ENCODE measurements at regions of chr2 and their contacts with region 1.

Region 1: DNA sequence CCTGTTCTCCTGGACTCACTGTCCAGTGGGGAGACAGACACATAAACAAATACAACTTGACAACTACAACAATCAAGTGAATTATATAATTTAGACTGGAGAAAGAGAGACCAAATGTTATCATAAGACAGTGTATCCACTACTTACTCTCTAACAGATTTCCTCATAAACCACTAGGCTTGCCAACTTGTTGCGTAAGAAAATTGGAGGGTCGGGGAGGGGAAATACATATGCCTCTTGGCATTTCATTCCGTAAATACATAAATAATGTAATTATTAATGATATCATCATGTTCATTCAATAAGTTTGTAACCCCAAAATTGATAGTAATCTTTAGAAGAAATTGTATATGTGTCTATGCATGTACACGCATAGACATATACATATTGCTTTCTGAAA is 14.9 kb downstream of the RAB6D start:
- DNase-seq: no peak
- H3K4me3 ChIP-seq: no peak overlapping the region
- H3K27ac ChIP-seq: no peak overlapping the region
- H3K4me1 ChIP-seq: no peaks in the 10 kb centered on the region
- H3K27me3 ChIP-seq: no peaks in the 10 kb centered on the region
- CTCF ChIP-seq: no peak

Region 2: DNA sequence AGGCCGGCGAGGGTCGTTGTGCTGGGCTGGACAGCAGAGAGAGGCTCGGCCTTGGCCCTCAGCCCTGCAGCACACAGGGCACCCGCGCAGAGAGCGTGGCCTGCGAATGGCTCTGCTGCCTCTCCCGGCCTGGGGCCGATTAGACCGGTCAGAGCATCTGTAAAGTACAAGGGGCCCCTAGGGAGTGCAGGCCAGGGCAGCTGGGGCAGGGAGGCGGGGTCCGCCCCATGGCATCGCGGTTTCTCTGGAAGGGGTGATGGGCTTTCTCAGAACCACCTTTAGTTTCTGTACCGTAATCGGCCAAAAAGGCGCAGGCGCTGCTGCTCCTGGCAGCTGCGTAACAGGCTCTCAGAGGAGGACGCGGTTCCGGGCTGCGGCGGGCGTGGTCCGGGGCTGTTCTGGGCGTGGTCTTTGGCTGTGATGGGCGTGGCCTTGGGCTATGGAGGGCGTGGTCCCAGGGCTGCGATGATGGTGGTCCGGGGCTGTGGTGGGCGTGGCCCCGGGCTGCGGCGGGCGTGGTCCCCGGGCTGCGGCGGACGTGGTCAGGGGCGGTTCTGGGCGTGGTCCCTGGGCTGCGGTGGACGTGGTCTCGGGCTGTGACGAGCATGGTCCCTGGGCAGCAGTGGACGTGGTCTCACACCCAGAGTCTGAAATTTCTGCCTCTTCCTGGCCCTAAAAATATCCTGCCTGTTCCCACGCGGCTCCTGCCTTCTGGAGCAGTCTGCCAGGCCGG is 621.6 kb before region 1 on chr2:
- CTCF ChIA-PET with region 1: no interaction called
- dilution Hi-C with region 1: loop called (anchors 25 kb)
- in situ Hi-C with region 1: no loop called
- intact Hi-C with region 1: no loop called
- DNase-seq: peak; percentile 73
- H3K4me3 ChIP-seq: peak overlapping the region; percentile 61 to 66 (median 63)
- H3K27ac ChIP-seq: peak overlapping the region; percentile 41
- H3K4me1 ChIP-seq: peaks cover 20% of the 10 kb centered on the region
- H3K27me3 ChIP-seq: no peaks in the 10 kb centered on the region
- CTCF ChIP-seq: no peak

Region 3: GRCh38 chr2:131016826-131017741 is 331.9 kb before region 1 on chr2:
- CTCF ChIA-PET with region 1: no interaction called
- dilution Hi-C with region 1: no loop called
- in situ Hi-C with region 1: no loop called
- intact Hi-C with region 1: no loop called
- DNase-seq: peak; percentile 98
- H3K4me3 ChIP-seq: peak overlapping the region; percentile 25 to 46 (median 40)
- H3K27ac ChIP-seq: peak overlapping the region; percentile 94
- H3K4me1 ChIP-seq: peaks cover 42% of the 10 kb centered on the region
- H3K27me3 ChIP-seq: no peaks in the 10 kb centered on the region
- CTCF ChIP-seq: peak in 1 of 2 donors; percentile 5

Region 4: DNA sequence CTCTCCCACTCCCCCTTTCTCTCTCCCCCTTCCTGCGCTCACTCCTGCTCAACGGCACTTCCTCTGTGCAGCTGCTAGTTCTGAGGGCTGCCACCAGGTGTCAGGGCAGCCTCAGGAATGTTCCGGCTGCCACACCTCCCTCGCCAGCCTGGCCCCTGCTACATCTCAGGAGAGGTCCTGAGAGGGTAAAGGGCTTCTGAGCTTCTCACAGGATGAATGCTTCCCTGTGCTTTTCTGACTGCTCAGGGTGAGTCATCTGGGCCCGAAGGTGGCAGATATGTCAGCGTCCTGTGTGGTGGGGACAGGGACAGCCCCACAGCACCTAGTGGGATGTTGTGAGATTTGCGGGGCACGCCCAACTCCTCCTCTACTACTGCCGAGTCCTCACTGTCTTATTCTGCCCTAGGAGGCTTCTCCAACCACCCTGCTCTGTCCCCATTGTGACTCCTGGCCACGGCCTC is 194.9 kb before region 1 on chr2:
- CTCF ChIA-PET with region 1: no interaction called
- dilution Hi-C with region 1: no loop called
- in situ Hi-C with region 1: loop called in 1 of 2 experiments (anchors 25 kb)
- intact Hi-C with region 1: no loop called
- DNase-seq: peak; percentile 46
- H3K4me3 ChIP-seq: no peak overlapping the region
- H3K27ac ChIP-seq: no peak overlapping the region
- H3K4me1 ChIP-seq: no peaks in the 10 kb centered on the region
- H3K27me3 ChIP-seq: no peaks in the 10 kb centered on the region
- CTCF ChIP-seq: peak; percentile 77 to 91

Region 5: GRCh38 chr2:132267105-132267497 is 918.1 kb after region 1 on chr2:
- CTCF ChIA-PET with region 1: no interaction called
- dilution Hi-C with region 1: no loop called
- in situ Hi-C with region 1: no loop called
- intact Hi-C with region 1: no loop called
- DNase-seq: no peak
- H3K4me3 ChIP-seq: no peak overlapping the region
- H3K27ac ChIP-seq: no peak overlapping the region
- H3K4me1 ChIP-seq: peaks cover 4% of the 10 kb centered on the region
- H3K27me3 ChIP-seq: no peaks in the 10 kb centered on the region
- CTCF ChIP-seq: no peak